Caco-2 (cell line): ENCODE measurements at regions of chr6 and their contacts with region 1.

Region 1: DNA sequence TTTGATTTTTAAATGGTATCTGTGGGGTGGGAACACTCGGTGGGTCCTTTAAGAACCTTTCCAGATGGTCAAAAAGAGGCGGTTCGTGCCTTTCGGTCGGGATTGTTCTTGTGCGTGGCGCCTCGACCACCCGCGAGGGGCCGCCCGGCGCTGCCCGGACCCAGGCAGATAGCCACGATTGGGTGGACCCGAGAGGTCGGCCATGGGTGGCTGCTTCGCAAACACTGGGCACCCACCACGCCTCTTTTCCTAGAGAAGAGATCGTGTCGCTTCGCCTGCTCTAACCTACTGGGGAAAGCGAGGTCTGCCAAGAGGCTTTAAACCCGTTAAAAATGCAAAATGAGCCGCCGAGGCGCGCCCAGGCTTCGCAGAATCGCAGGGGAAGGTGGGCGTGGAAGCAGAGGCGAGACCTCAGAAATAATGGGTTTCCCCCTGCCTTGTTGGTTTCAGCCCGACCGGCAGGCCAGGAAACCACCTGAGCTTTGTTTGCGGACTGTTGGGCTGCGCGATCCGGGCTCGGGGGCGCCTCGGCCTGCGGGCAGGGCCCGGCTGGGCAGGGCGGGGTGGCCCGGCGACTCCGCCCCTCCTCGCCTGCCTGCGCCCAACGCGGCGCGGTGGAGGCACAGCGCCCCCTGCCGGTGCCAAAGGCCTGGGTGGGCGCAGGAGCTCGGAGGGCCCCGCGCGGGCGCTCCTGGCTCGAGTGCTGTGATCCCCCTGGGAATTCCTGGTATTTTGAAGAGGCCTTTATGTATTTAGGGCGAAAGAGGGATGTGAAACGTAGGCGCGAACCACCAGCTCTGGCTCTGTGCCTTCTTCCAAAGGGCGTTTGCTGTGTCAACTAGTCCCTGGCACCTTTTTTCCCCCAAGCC is 1.6 kb downstream of the MARCKS start:
- DNase-seq: peak; percentile 95 to 96
- H3K4me3 ChIP-seq: peak overlapping the region; percentile 64
- H3K4me3 Mint-ChIP-seq: no peak overlapping the region
- H3K27ac Mint-ChIP-seq: no peak overlapping the region
- H3K4me1 ChIP-seq: peaks cover 3% of the 10 kb centered on the region
- H3K4me1 Mint-ChIP-seq: no peaks in the 10 kb centered on the region
- H3K27me3 ChIP-seq: no peaks in the 10 kb centered on the region
- H3K27me3 Mint-ChIP-seq: no peaks in the 10 kb centered on the region
- CTCF ChIP-seq: peak; percentile 82 to 90

Region 2: DNA sequence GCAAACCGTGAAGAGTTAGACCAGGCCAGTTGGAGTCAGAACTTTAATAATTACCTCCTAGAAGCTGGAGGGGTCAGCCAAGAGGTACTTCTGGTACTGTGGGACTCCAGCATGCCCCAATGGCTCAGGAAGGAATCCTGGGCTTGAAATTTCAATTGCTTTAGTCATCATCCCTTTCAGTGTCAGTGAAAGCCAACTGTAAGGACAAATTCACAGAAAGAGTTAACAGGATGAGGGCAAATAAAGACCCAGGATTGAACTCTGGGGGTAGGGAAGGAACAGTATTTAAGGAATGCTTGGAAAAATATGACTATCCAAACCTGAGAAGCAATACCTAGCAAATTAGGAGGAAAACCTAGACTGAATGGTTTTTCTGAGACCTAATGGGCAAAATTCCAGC is 736.7 kb before region 1 on chr6:
- CTCF ChIA-PET with region 1: no interaction called
- POLR2A ChIA-PET with region 1: no interaction called
- intact Hi-C with region 1: loop called (anchors 5 kb)
- DNase-seq: peak; percentile 33 to 38
- H3K4me3 ChIP-seq: no peak overlapping the region
- H3K4me3 Mint-ChIP-seq: no peak overlapping the region
- H3K27ac Mint-ChIP-seq: no peak overlapping the region
- H3K4me1 ChIP-seq: 0 out of 2 replicates have a peak, but pooled peaks cover 6% of the 10 kb centered on the region
- H3K4me1 Mint-ChIP-seq: peaks cover 10% of the 10 kb centered on the region
- H3K27me3 ChIP-seq: no peaks in the 10 kb centered on the region
- H3K27me3 Mint-ChIP-seq: no peaks in the 10 kb centered on the region
- CTCF ChIP-seq: peak in 1 of 2 experiments; percentile 23

Region 3: GRCh38 chr6:113221850-113222249 is 636.9 kb before region 1 on chr6:
- CTCF ChIA-PET with region 1: no interaction called
- POLR2A ChIA-PET with region 1: no interaction called
- intact Hi-C with region 1: no loop called
- DNase-seq: no peak
- H3K4me3 ChIP-seq: no peak overlapping the region
- H3K4me3 Mint-ChIP-seq: no peak overlapping the region
- H3K27ac Mint-ChIP-seq: no peak overlapping the region
- H3K4me1 ChIP-seq: no peaks in the 10 kb centered on the region
- H3K4me1 Mint-ChIP-seq: no peaks in the 10 kb centered on the region
- H3K27me3 ChIP-seq: no peaks in the 10 kb centered on the region
- H3K27me3 Mint-ChIP-seq: no peaks in the 10 kb centered on the region
- CTCF ChIP-seq: no peak

Region 4: DNA sequence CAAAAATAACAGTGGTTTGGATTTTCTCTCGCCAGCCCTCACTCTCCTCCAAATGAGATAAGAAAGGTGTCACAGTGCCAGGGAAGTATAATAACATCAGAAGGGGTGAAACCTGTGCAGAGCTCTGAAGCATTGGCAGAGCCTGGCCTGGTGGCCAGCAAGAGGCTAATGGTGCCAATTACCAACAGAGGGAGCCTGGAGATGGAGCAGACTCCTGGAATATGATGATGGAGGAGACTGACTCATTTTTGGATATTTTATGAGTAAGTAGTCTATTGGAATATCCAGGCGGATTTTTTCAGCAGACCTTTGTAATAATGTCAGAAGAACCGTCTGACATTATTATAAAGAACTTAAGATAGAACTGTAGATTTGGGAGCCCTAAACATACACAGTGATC is 444.2 kb before region 1 on chr6:
- CTCF ChIA-PET with region 1: no interaction called
- POLR2A ChIA-PET with region 1: no interaction called
- intact Hi-C with region 1: loop called (anchors 2 kb)
- DNase-seq: peak; percentile 39 to 45
- H3K4me3 ChIP-seq: no peak overlapping the region
- H3K4me3 Mint-ChIP-seq: no peak overlapping the region
- H3K27ac Mint-ChIP-seq: no peak overlapping the region
- H3K4me1 ChIP-seq: peaks cover 8% of the 10 kb centered on the region; the same call in 1 of the 2 replicates
- H3K4me1 Mint-ChIP-seq: peaks cover 13% of the 10 kb centered on the region
- H3K27me3 ChIP-seq: no peaks in the 10 kb centered on the region
- H3K27me3 Mint-ChIP-seq: no peaks in the 10 kb centered on the region
- CTCF ChIP-seq: peak in 1 of 2 experiments; percentile 50

Region 5: DNA sequence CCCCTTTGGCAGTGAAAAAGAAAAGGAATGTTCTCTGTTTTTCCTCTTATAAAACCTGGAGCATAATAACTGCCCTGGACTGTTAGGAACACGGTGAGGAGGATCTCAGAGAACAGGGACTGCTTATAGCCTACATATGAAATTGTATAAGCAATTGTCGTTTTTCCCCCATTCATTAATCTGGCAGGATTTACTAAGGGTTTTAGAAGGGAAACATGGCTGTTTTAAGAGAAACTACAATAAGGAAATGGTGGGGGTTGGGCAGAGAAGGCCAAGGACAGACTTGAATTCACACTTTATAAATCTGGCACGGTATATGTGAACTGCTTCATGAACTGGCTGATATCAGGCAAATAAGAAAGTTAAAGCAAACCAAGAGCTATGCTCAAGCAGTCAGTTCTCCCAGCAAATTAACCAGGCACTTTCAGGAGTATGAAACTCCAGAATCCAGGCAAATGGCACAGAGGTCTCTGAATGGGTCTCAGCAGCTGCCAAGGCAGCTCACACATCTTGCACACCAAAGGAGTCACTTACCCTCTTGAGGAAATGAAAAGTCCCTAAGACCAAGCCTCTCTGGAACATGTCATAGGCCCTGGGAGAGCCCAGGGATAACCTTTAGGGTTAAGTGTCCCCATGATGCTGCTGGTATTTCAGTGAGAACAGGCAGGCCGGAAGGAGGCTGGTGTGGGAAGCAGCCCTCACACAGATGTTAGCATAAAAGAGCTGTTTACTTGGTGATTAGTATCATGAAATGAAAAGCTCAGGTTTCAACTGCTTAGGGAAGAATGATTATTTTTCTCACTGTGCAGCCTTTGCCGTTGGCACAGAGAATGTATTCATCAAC is 262.1 kb before region 1 on chr6:
- CTCF ChIA-PET with region 1: interaction called, 13 read pairs
- POLR2A ChIA-PET with region 1: no interaction called
- intact Hi-C with region 1: loop called (anchors 1 kb)
- DNase-seq: no peak
- H3K4me3 ChIP-seq: no peak overlapping the region
- H3K4me3 Mint-ChIP-seq: no peak overlapping the region
- H3K27ac Mint-ChIP-seq: no peak overlapping the region
- H3K4me1 ChIP-seq: peaks cover 11% of the 10 kb centered on the region; the same call in 1 of the 2 replicates
- H3K4me1 Mint-ChIP-seq: peaks cover 22% of the 10 kb centered on the region
- H3K27me3 ChIP-seq: no peaks in the 10 kb centered on the region
- H3K27me3 Mint-ChIP-seq: no peaks in the 10 kb centered on the region
- CTCF ChIP-seq: no peak

Region 6: GRCh38 chr6:113690281-113691259 is 168.1 kb before region 1 on chr6:
- CTCF ChIA-PET with region 1: interaction called, 4 read pairs
- POLR2A ChIA-PET with region 1: interaction called, 4 read pairs
- intact Hi-C with region 1: loop called (anchors 2 kb)
- DNase-seq: no peak
- H3K4me3 ChIP-seq: no peak overlapping the region
- H3K4me3 Mint-ChIP-seq: no peak overlapping the region
- H3K27ac Mint-ChIP-seq: no peak overlapping the region
- H3K4me1 ChIP-seq: peaks cover 50% of the 10 kb centered on the region
- H3K4me1 Mint-ChIP-seq: peaks cover 44% of the 10 kb centered on the region
- H3K27me3 ChIP-seq: no peaks in the 10 kb centered on the region
- H3K27me3 Mint-ChIP-seq: no peaks in the 10 kb centered on the region
- CTCF ChIP-seq: no peak

Region 7: GRCh38 chr6:113818578-113818977 is 40.1 kb before region 1 on chr6:
- CTCF ChIA-PET with region 1: interaction called, 3 read pairs
- POLR2A ChIA-PET with region 1: no interaction called
- intact Hi-C with region 1: loop called (anchors 2 kb)
- DNase-seq: no peak
- H3K4me3 ChIP-seq: no peak overlapping the region
- H3K4me3 Mint-ChIP-seq: no peak overlapping the region
- H3K27ac Mint-ChIP-seq: no peak overlapping the region
- H3K4me1 ChIP-seq: peaks cover 16% of the 10 kb centered on the region
- H3K4me1 Mint-ChIP-seq: no peaks in the 10 kb centered on the region
- H3K27me3 ChIP-seq: no peaks in the 10 kb centered on the region
- H3K27me3 Mint-ChIP-seq: no peaks in the 10 kb centered on the region
- CTCF ChIP-seq: no peak

Region 8: GRCh38 chr6:114084322-114084890 is 225.7 kb after region 1 on chr6:
- CTCF ChIA-PET with region 1: no interaction called
- POLR2A ChIA-PET with region 1: no interaction called
- intact Hi-C with region 1: no loop called
- DNase-seq: no peak
- H3K4me3 ChIP-seq: no peak overlapping the region
- H3K4me3 Mint-ChIP-seq: no peak overlapping the region
- H3K27ac Mint-ChIP-seq: no peak overlapping the region
- H3K4me1 ChIP-seq: no peaks in the 10 kb centered on the region
- H3K4me1 Mint-ChIP-seq: no peaks in the 10 kb centered on the region
- H3K27me3 ChIP-seq: no peaks in the 10 kb centered on the region
- H3K27me3 Mint-ChIP-seq: no peaks in the 10 kb centered on the region
- CTCF ChIP-seq: no peak

Region 9: GRCh38 chr6:114390176-114390575 is 531.5 kb after region 1 on chr6:
- CTCF ChIA-PET with region 1: no interaction called
- POLR2A ChIA-PET with region 1: no interaction called
- intact Hi-C with region 1: no loop called
- DNase-seq: no peak
- H3K4me3 ChIP-seq: no peak overlapping the region
- H3K4me3 Mint-ChIP-seq: no peak overlapping the region
- H3K27ac Mint-ChIP-seq: no peak overlapping the region
- H3K4me1 ChIP-seq: peaks cover 11% of the 10 kb centered on the region
- H3K4me1 Mint-ChIP-seq: peaks cover 6% of the 10 kb centered on the region
- H3K27me3 ChIP-seq: no peaks in the 10 kb centered on the region
- H3K27me3 Mint-ChIP-seq: no peaks in the 10 kb centered on the region
- CTCF ChIP-seq: no peak